Activated CD8-positive, alpha-beta T cell treated with anti-CD3 and anti-CD28 coated beads, Interleukin-2, amount 10 ng/mL, durations not matched to agents 7 days and 5 days (primary cell): ENCODE measurements at regions of chr3 and their contacts with region 1.

Region 1: GRCh38 chr3:151168269-151169094 is 34.5 kb downstream of the GPR171 start:
- DNase-seq: peak; percentile 89
- ATAC-seq: peak; percentile 62
- H3K4me3 Mint-ChIP-seq: no peak overlapping the region
- H3K27ac Mint-ChIP-seq: no peak overlapping the region
- H3K4me1 Mint-ChIP-seq: peaks cover 49% of the 10 kb centered on the region
- H3K27me3 Mint-ChIP-seq: no peaks in the 10 kb centered on the region

Region 2: DNA sequence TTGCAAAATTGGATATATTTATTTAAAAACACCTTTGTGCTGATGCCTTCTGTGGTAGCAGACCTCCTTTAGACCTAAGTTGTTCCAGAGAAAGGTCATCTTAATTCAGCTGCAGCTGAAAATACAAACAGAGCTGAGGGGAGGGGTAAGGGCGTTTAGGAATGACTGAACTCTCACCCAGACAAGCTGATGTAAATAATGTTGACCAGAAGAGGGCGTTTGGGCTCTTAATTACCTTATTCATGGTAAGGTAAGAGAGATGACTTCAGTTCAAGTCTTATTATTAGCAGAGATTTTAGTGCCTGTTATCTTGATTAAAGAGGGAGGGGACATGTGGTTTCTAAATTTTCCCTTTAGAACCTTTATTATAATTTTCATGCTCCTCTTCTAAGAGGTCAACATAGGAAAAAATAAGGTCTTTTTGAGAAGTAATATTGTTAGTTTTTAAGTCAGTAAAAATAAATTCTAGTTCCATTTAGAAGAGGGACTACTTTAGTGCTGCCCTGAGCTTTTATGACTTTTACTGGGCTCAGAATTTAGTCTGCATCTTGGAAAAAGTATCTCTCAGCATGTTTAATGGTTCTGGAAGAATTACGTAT is 11.8 kb before region 1 on chr3:
- CTCF ChIA-PET with region 1: interaction called, 17 read pairs
- POLR2A ChIA-PET with region 1: interaction called, 3 read pairs
- DNase-seq: peak; percentile 64
- ATAC-seq: peak; percentile 87
- H3K4me3 Mint-ChIP-seq: no peak overlapping the region
- H3K27ac Mint-ChIP-seq: no peak overlapping the region
- H3K4me1 Mint-ChIP-seq: no peaks in the 10 kb centered on the region
- H3K27me3 Mint-ChIP-seq: peaks cover 6% of the 10 kb centered on the region

Region 3: DNA sequence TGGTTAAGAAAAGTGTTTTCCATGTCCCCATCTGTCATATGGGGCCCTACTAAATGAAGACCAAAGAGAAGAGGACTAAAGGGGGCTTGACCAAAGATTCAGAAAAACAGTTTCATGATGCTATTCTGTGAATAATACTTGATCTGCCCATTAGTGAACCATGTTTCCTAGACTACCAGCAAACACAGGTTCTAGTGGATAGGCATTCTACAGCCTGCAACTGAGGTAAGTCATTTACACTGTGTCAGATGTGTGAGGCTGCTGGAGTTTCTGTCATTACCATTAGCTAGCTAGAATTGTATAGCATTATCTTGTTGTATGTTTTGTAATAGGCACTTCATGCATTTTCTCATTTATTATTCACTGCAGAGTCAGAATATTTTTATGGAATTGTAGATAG is 28.0 kb after region 1 on chr3:
- CTCF ChIA-PET with region 1: interaction called, 56 read pairs
- POLR2A ChIA-PET with region 1: interaction called, 28 read pairs
- DNase-seq: no peak
- ATAC-seq: no peak
- H3K4me3 Mint-ChIP-seq: no peak overlapping the region
- H3K27ac Mint-ChIP-seq: peak overlapping the region; percentile 4
- H3K4me1 Mint-ChIP-seq: peaks cover 31% of the 10 kb centered on the region
- H3K27me3 Mint-ChIP-seq: no peaks in the 10 kb centered on the region

Region 4: GRCh38 chr3:151210676-151211381 is 42.3 kb after region 1 on chr3:
- CTCF ChIA-PET with region 1: interaction called, 108 read pairs
- POLR2A ChIA-PET with region 1: interaction called, 3 read pairs
- DNase-seq: peak; percentile 43
- ATAC-seq: peak; percentile 66
- H3K4me3 Mint-ChIP-seq: peak overlapping the region; percentile 74
- H3K27ac Mint-ChIP-seq: peak overlapping the region; percentile 86
- H3K4me1 Mint-ChIP-seq: peaks cover 57% of the 10 kb centered on the region
- H3K27me3 Mint-ChIP-seq: no peaks in the 10 kb centered on the region

Region 5: GRCh38 chr3:151265866-151266265 is 97.4 kb after region 1 on chr3:
- CTCF ChIA-PET with region 1: interaction called, 14 read pairs
- POLR2A ChIA-PET with region 1: no interaction called
- DNase-seq: no peak
- ATAC-seq: no peak
- H3K4me3 Mint-ChIP-seq: no peak overlapping the region
- H3K27ac Mint-ChIP-seq: no peak overlapping the region
- H3K4me1 Mint-ChIP-seq: peaks cover 38% of the 10 kb centered on the region
- H3K27me3 Mint-ChIP-seq: no peaks in the 10 kb centered on the region

Region 6: DNA sequence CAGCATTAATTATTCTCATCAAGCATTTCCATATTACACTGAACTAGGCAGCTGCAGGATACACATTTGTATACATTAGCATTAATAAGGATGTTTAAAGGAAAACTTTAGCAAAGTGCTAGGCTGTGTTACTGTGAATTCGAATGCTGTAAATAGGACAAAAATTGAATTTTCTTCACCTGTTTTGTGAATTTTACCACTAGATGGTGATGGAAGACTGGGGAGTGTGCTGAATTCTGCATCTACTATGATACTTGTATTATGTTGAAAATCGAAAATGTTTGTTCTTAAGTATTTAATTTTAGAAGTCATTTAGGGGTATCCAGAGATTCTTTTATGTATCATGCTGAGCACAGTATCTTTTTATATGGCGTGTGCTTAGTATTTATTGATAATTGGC is 122.2 kb after region 1 on chr3:
- CTCF ChIA-PET with region 1: interaction called, 21 read pairs
- POLR2A ChIA-PET with region 1: no interaction called
- DNase-seq: no peak
- ATAC-seq: no peak
- H3K4me3 Mint-ChIP-seq: no peak overlapping the region
- H3K27ac Mint-ChIP-seq: no peak overlapping the region
- H3K4me1 Mint-ChIP-seq: no peaks in the 10 kb centered on the region
- H3K27me3 Mint-ChIP-seq: peaks cover 23% of the 10 kb centered on the region

Region 7: DNA sequence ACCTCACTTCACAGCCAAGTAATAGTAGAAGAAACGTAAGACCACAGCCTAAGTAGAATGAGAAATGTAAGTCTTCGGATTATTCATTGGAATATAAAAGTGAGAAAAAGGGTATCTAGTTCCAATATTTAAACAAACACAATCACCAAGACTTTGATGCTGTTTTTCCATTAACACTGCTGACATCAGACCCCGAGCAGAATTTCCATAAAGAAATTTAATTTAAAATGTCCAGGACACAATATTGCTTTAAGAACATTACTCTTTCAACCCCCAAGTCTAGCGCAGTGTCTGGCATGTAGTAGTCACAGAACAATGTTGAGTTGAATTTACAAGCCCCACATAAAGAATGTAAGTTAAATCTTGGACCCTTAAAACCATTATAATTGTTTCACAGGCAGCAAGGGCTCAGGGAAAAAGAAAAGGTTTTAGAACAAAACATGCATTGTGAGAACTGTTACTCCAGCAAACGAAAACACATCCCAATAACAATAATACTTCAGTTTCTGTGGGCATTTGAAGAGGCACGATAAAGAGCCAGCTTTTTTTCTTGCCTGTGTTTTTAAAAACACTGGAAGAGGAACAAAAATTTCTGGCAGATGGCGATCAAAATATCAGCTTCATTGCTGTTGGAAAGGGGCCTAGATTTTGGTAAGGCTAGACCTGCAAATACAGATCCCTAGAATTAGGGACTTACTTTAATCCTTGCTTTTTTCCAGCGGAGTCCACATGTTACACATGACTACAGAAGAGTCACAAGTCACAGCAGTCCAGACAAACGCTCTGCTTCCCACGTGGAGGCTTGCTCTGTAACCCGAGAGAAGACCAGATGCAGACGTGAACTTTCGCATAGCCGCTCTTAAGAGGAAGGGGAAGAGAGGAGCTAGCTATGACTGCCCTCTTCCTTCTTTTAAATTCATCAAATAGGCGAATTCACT is 370.2 kb after region 1 on chr3:
- CTCF ChIA-PET with region 1: no interaction called
- POLR2A ChIA-PET with region 1: no interaction called
- DNase-seq: no peak
- ATAC-seq: no peak
- H3K4me3 Mint-ChIP-seq: no peak overlapping the region
- H3K27ac Mint-ChIP-seq: no peak overlapping the region
- H3K4me1 Mint-ChIP-seq: no peaks in the 10 kb centered on the region
- H3K27me3 Mint-ChIP-seq: no peaks in the 10 kb centered on the region